ENCODE measurements at regions of chr3 and their contacts with region 1.

Region 1: DNA sequence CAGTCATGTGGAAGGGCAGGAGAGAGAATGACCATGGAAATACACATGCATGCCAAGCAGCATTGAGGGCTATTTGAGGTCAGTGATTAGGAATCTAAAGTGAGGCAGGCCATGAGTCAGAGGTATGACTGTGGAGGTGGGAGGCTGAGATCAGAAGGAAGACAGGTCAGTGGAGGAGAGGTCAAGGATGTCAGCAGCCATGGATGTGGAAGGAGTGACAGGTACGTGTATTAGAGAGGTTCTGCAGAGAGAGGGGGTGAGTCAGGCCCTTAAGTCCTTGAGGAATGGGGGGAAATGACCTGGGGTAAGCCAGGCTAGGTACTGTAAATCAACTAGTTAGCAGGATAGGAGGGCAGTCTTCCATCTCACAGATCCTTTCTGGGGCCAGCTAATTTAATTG is 166.6 kb downstream of the ANO10 start:
- DNase-seq: no peak
- H3K4me3 ChIP-seq: no peak overlapping the region
- H3K27ac ChIP-seq: no peak overlapping the region
- H3K4me1 ChIP-seq: no peaks in the 10 kb centered on the region
- H3K27me3 ChIP-seq: no peaks in the 10 kb centered on the region
- CTCF ChIP-seq: no peak
- POLR2A ChIP-seq: no peak

Region 2: DNA sequence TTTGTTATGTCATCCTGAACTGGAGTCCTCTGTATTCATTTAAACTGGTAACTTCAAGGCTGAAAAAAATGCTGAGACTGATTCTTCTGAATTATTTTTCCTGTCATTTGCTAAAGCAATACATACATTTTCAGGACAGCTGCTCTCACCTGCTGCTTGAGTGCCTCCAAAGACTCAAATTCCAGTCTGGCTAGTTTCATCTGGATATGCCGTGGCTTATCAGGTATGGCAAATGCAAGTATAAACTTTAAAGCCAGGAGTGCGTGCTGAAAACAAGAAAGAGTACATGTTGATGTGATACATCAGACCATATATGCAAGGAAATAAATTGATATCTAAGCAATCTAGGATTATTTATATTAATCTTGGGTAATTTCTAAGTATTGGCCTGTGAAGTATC is 22.8 kb before region 1 on chr3:
- intact Hi-C with region 1: loop called (anchors 1 kb)
- DNase-seq: no peak
- H3K4me3 ChIP-seq: no peak overlapping the region
- H3K27ac ChIP-seq: no peak overlapping the region
- H3K4me1 ChIP-seq: no peaks in the 10 kb centered on the region
- H3K27me3 ChIP-seq: no peaks in the 10 kb centered on the region
- CTCF ChIP-seq: no peak
- POLR2A ChIP-seq: no peak

Region 3: DNA sequence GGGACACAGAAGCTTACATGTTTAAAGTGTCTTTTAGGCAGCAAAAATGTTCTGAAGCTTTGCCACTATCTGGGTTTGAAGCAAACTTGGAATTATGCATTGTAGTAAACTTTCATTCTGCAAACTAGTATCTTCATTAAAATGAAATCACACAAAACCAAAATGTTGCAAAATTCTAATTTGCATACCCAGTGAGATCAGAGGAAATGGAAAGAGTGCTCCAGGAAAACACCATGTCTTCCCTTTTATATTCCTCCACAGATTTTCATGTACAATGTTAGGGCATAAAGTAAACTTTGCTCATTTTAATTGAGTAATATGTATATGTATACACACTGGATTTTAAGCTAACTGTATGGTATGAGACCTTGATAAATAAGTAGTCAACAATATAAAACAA is 142.7 kb after region 1 on chr3:
- intact Hi-C with region 1: no loop called
- DNase-seq: no peak
- H3K4me3 ChIP-seq: no peak overlapping the region
- H3K27ac ChIP-seq: no peak overlapping the region
- H3K4me1 ChIP-seq: no peaks in the 10 kb centered on the region
- H3K27me3 ChIP-seq: no peaks in the 10 kb centered on the region
- CTCF ChIP-seq: no peak
- POLR2A ChIP-seq: no peak

Measured in breast epithelium (tissue), 4 donors.